G401 (cell line): ENCODE measurements at regions of chr20 and their contacts with region 1.

Region 1: GRCh38 chr20:3632311-3633004 is 30.7 kb downstream of the GFRA4 start:
- DNase-seq: no peak

Region 2: GRCh38 chr20:3572151-3572550 is 60.3 kb before region 1 on chr20:
- in situ Hi-C with region 1: loop called (anchors 10 kb)
- DNase-seq: no peak

Region 3: GRCh38 chr20:3586093-3586492 is 46.4 kb before region 1 on chr20:
- in situ Hi-C with region 1: no loop called
- DNase-seq: no peak

Region 4: GRCh38 chr20:3603108-3603507 is 29.4 kb before region 1 on chr20:
- in situ Hi-C with region 1: no loop called
- DNase-seq: no peak